Ovary (tissue), 10 donors: ENCODE measurements at regions of chr6 and their contacts with region 1.

Region 1: GRCh38 chr6:169141671-169142537 is 111.7 kb downstream of the THBS2 start:
- DNase-seq: no peak
- H3K4me3 ChIP-seq: no peak overlapping the region
- H3K27ac ChIP-seq: no peak overlapping the region
- H3K4me1 ChIP-seq: peaks cover 24% of the 10 kb centered on the region
- H3K27me3 ChIP-seq: no peaks in the 10 kb centered on the region
- CTCF ChIP-seq: no peak
- EP300 ChIP-seq: no peak
- POLR2A ChIP-seq: no peak

Region 2: DNA sequence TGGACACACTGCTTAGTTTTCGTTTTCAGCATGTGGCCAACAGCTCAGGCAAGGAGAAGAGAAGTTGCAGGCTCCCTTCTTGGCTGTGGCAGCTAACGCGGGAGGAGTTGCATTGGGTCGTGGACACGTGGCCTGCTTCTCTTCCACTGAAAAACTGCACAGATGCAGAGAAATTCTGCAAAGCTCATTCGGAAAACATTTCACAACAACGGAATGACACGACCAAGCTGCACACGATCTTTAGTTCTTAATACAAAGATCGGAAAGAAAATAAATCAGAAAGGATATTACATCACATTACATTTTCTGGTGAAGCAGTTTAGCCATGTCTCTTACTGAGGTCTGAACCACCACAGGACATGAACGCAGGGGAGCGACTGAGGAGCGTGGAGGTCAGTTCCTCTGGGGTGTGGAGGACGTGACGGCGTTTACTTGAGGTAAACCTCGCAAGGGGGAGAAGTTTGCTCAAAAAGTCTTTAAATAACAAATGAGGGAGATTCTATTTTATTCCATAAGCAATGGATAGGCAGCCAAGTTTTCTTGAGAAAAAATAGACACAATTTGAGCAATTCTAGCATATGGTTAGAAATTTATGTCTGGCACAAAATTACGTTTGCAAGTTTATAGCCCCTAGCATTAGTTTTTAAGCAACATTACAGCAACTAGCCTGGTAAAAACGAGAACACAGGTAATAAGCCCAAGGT is 66.5 kb before region 1 on chr6:
- intact Hi-C with region 1: loop called in 1 of 4 experiments (anchors 5 kb)
- DNase-seq: peak; percentile 72 to 86 (median 79)
- H3K4me3 ChIP-seq: no peak overlapping the region
- H3K27ac ChIP-seq: peak overlapping the region in 1 of 2 donors; percentile 59
- H3K4me1 ChIP-seq: peaks cover 24% of the 10 kb centered on the region
- H3K27me3 ChIP-seq: no peaks in the 10 kb centered on the region
- CTCF ChIP-seq: no peak
- EP300 ChIP-seq: peak; percentile 30
- POLR2A ChIP-seq: peak; percentile 13

Region 3: GRCh38 chr6:169479783-169480495 is 338.0 kb after region 1 on chr6:
- intact Hi-C with region 1: loop called in 1 of 4 experiments (anchors 5 kb)
- DNase-seq: no peak
- H3K4me3 ChIP-seq: no peak overlapping the region
- H3K27ac ChIP-seq: no peak overlapping the region
- H3K4me1 ChIP-seq: no peaks in the 10 kb centered on the region
- H3K27me3 ChIP-seq: no peaks in the 10 kb centered on the region
- CTCF ChIP-seq: no peak
- EP300 ChIP-seq: no peak
- POLR2A ChIP-seq: no peak

Region 4: GRCh38 chr6:169583886-169584541 is 442.1 kb after region 1 on chr6:
- intact Hi-C with region 1: no loop called
- DNase-seq: no peak
- H3K4me3 ChIP-seq: no peak overlapping the region
- H3K27ac ChIP-seq: no peak overlapping the region
- H3K4me1 ChIP-seq: no peaks in the 10 kb centered on the region
- H3K27me3 ChIP-seq: no peaks in the 10 kb centered on the region
- CTCF ChIP-seq: no peak
- EP300 ChIP-seq: no peak
- POLR2A ChIP-seq: no peak